ENCODE measurements at regions of chr10 and their contacts with region 1.

Region 1: DNA sequence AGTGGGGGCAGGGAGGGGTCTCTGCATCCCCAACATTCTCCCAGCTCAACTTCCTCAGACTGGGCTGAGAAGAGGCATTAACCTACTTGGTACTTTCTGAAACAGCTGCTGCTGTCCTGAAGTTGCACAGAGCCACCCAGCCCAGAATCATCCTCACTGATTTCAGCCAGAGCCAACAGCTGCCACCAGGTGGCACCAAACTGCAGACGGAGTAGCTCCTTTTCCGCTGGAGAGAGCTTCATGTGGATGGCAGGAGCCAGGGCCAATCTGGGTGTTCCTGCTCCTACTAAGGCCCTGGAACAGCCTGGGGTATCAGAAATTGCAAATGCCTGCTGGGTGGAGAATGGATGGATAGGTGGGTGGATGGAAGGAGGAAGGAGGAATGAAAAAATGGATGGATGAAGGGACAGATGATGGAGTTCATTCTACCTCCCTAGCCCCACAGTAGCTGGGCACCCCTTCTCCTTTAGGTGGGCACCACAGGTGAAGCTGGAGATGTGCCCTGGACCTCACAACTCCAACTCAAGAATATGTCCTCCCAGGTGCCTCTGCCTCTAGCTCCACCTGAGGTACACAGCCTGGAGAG is 11.8 kb upstream of the DRGX start:
- DNase-seq: peak; percentile 99
- ATAC-seq: peak; percentile 94
- H3K4me3 ChIP-seq: no peak overlapping the region
- H3K27ac ChIP-seq: no peak overlapping the region
- H3K4me1 ChIP-seq: no peaks in the 10 kb centered on the region
- H3K27me3 ChIP-seq: peaks cover 54% of the 10 kb centered on the region
- CTCF ChIP-seq: peak; percentile 100

Region 2: DNA sequence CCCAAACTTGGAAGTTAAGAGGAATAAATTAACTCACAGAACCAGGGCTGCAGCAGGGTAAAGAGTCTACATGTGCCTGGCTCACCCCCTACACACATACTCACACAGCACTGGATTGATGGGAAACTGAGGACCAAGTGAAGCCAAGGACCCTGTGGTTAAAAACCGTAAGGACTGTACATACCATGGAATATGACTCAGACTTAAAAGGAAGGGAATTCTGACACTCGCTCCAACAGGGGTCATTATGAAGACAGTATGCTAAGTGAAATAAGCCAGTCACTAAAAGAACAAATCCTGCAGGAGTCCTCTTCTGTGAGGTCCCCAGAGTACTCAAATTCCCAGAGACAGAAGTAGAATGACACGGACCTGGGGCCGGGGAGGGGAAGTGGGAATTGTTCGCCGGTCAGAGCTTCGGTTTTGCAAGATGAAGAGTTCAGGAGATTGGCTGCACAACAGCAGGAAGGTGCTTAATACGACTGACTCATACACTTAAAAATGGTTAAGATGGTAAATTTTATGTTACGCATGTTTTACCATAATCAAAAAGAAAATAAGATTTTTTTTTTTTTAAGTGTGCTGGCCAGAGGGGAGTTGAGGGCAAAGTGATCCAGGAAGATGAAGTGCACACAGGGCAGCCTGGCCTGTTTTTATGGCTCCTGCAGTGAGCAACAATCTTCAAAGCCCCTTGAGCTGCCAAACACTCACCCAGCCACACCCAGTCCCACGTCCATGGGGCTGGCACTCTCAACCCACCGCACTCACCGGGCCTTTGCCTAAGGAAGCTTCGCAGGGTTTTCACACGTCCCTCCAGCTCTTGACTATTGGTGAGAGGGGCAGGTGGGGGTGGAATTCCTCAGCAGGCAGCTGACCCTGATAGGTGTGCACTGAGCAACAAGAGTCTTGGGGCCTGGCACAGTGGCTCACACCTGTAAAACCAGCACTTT is 38.2 kb before region 1 on chr10:
- CTCF ChIA-PET with region 1: no interaction called
- POLR2A ChIA-PET with region 1: no interaction called
- intact Hi-C with region 1: no loop called
- DNase-seq: peak; percentile 31
- ATAC-seq: no peak
- H3K4me3 ChIP-seq: no peak overlapping the region
- H3K27ac ChIP-seq: no peak overlapping the region
- H3K4me1 ChIP-seq: no peaks in the 10 kb centered on the region
- H3K27me3 ChIP-seq: peaks cover 29% of the 10 kb centered on the region
- CTCF ChIP-seq: no peak

Region 3: DNA sequence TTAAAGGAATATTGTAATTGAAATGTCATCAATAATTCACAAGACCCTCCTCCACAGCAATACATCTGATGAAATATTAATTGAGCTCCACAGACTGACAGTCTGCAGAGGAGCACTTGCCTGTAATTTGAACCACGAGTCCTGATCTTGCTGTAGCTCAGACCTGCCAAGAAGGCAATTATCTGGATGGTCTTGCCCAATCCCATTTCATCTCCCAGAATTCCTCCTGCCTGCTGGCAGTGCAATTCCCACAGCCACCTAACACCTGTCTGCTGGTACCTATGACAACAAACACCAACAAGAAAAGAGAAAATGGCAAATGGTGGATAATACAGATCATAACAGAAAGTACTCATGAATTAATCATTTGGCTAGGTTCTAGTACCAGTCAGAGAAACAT is 92.8 kb after region 1 on chr10:
- CTCF ChIA-PET with region 1: interaction called, 10 read pairs
- POLR2A ChIA-PET with region 1: no interaction called
- intact Hi-C with region 1: no loop called
- DNase-seq: no peak
- ATAC-seq: no peak
- H3K4me3 ChIP-seq: no peak overlapping the region
- H3K27ac ChIP-seq: no peak overlapping the region
- H3K4me1 ChIP-seq: 0 out of 2 replicates have a peak, but pooled peaks cover 6% of the 10 kb centered on the region
- H3K27me3 ChIP-seq: no peaks in the 10 kb centered on the region
- CTCF ChIP-seq: no peak

Region 4: GRCh38 chr10:49512121-49512809 is 104.6 kb after region 1 on chr10:
- CTCF ChIA-PET with region 1: interaction called, 54 read pairs
- POLR2A ChIA-PET with region 1: interaction called, 5 read pairs
- intact Hi-C with region 1: loop called (anchors 1 kb)
- DNase-seq: peak; percentile 72
- ATAC-seq: peak; percentile 75
- H3K4me3 ChIP-seq: no peak overlapping the region
- H3K27ac ChIP-seq: no peak overlapping the region
- H3K4me1 ChIP-seq: peaks cover 5% of the 10 kb centered on the region
- H3K27me3 ChIP-seq: no peaks in the 10 kb centered on the region
- CTCF ChIP-seq: peak; percentile 99

Region 5: DNA sequence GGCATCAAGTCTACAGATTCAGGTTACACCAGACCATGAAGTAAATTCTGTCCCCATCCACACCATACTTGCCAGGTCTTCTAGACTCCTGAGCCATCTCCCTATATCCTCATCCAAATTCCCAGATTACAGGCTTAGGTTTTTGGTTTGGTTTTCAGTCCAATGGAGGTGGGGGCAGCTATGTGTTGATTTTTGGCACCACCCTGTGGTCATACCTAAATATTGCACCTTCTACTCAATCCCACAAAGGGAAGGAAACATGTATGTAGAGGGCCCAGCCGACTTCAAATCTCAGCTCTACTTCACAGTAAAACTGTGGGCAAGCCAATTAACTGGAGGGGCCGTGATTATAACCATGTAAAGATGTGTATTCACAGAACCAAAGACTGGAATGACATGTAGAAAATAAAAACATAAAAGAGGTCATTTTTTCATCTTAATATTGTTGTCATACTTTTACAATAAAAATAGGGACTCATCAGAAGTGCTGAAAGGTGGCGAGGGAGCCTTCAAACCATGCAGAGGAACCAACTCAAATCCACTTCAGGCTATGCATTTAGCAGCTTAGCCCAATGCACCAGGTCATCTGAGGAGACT is 111.4 kb after region 1 on chr10:
- CTCF ChIA-PET with region 1: interaction called, 34 read pairs
- POLR2A ChIA-PET with region 1: interaction called, 4 read pairs
- intact Hi-C with region 1: loop called (anchors 1 kb)
- DNase-seq: peak; percentile 91
- ATAC-seq: peak; percentile 84
- H3K4me3 ChIP-seq: no peak overlapping the region
- H3K27ac ChIP-seq: no peak overlapping the region
- H3K4me1 ChIP-seq: no peaks in the 10 kb centered on the region
- H3K27me3 ChIP-seq: no peaks in the 10 kb centered on the region
- CTCF ChIP-seq: peak; percentile 99

Measured in PC-3 (cell line).